Activated CD8-positive, alpha-beta T cell treated with anti-CD3 and anti-CD28 coated beads for 36 hours (primary cell): ENCODE measurements at regions of chr2 and their contacts with region 1.

Region 1: GRCh38 chr2:24490674-24491625 is at the start of gene NCOA1:
- DNase-seq: peak; percentile 92
- ATAC-seq: peak; percentile 87
- H3K4me3 Mint-ChIP-seq: peak within 1 kb of the TSS; percentile 87
- H3K27ac Mint-ChIP-seq: peak within 1 kb of the TSS; percentile 90
- H3K4me1 Mint-ChIP-seq: peaks cover 48% of the 10 kb centered on the region
- H3K27me3 Mint-ChIP-seq: no peaks in the 10 kb centered on the region
- CTCF ChIP-seq: no peak
- total RNA-seq, gene NCOA1: 16.8 to 17.1 TPM

Region 2: DNA sequence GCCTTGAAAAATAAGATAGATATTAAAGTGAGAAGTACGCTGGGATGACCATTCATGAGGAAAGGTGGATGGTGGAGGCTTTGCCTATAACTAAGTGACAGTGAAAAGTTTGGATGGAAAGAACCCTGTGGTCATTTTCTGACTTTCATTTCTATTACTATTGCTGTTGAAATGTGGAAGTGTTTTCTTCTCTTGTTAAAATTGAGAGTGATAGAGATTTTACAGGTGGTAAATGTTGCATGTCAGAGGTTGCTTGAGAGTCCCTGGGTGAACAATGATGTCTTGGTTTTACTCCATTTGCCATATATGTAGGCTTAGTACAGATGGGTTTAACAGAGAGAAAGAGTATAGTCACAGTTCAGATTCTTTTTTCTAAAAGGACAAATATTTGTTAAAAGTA is 18.5 kb after region 1 on chr2:
- CTCF ChIA-PET with region 1: interaction called, 12 read pairs
- POLR2A ChIA-PET with region 1: interaction called, 3 read pairs
- intact Hi-C with region 1: no loop called
- DNase-seq: no peak
- ATAC-seq: no peak
- H3K4me3 Mint-ChIP-seq: no peak overlapping the region
- H3K27ac Mint-ChIP-seq: peak overlapping the region; percentile 34
- H3K4me1 Mint-ChIP-seq: peaks cover 68% of the 10 kb centered on the region
- H3K27me3 Mint-ChIP-seq: no peaks in the 10 kb centered on the region
- CTCF ChIP-seq: no peak